Right lobe of liver (tissue), 6 donors: ENCODE measurements at regions of chr11 and their contacts with region 1.

Region 1: DNA sequence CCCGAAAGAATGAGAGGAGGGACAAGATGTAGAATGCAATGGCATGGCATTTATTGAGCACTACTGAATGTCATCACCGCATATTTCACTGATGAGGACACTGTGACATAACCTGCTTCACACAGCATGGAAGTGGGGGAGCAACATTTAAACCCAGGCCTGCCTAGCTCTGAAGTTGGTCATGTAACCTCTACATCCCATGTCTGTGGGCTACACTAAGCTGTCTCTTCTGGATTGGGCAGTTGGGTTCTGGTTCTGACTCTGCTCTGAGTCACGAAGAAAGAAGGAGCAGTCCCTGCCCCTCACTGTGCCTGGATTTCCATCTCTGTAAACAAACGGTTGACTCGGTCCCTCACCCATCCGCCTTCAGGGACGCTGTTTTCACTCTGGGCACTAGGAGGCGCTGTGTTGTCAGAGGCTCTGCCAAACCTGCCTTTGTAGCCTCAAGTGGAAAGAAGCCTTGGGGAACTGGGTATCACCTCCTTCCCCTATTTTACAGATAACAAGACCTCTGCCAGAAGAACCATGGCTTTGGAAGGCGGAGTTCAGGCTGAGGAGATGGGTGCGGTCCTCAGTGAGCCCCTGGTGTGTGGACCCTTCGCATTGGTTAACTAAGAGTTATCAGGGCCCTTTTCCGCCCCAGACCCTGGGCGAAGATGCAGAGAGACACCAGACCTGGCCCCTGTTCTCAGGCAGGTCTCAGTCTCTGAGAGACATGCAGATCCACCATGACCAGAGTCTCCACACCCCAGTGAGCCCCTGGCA is 12.7 kb upstream of the ARHGEF17 start:
- DNase-seq: peak in 2 of 3 donors; percentile 56 to 64
- ATAC-seq: peak; percentile 56 to 81 (median 76)
- H3K4me3 ChIP-seq: no peak overlapping the region
- H3K27ac ChIP-seq: no peak overlapping the region
- H3K4me1 ChIP-seq: no peaks in the 10 kb centered on the region
- H3K27me3 ChIP-seq: no peaks in the 10 kb centered on the region
- CTCF ChIP-seq: peak; percentile 63 to 91 (median 82)
- POLR2A ChIP-seq: no peak

Region 2: GRCh38 chr11:73384872-73385689 is 89.7 kb after region 1 on chr11:
- intact Hi-C with region 1: loop called (anchors 5 to 10 kb)
- DNase-seq: peak; percentile 67 to 85 (median 78)
- ATAC-seq: peak; percentile 45 to 69 (median 58)
- H3K4me3 ChIP-seq: no peak overlapping the region
- H3K27ac ChIP-seq: peak overlapping the region in 2 of 3 donors; percentile 53 to 72
- H3K4me1 ChIP-seq: peaks cover 0 to 8% (median 0%) of the 10 kb centered on the region in 4 donors
- H3K27me3 ChIP-seq: no peaks in the 10 kb centered on the region
- CTCF ChIP-seq: no peak
- POLR2A ChIP-seq: no peak

Region 3: GRCh38 chr11:73393479-73394380 is 98.3 kb after region 1 on chr11:
- intact Hi-C with region 1: loop called (anchors 5 to 10 kb)
- DNase-seq: peak; percentile 68 to 77 (median 76)
- ATAC-seq: peak; percentile 80 to 87 (median 84)
- H3K4me3 ChIP-seq: no peak overlapping the region
- H3K27ac ChIP-seq: no peak overlapping the region
- H3K4me1 ChIP-seq: no peaks in the 10 kb centered on the region
- H3K27me3 ChIP-seq: no peaks in the 10 kb centered on the region
- CTCF ChIP-seq: peak; percentile 73 to 82 (median 80)
- POLR2A ChIP-seq: no peak